Activated naive CD4-positive, alpha-beta T cell treated with anti-CD3 and anti-CD28 coated beads for 36 hours (primary cell): ENCODE measurements at regions of chr4 and their contacts with region 1.

Region 1: GRCh38 chr4:107719922-107720722 is at the start of gene PAPSS1:
- DNase-seq: peak; percentile 96
- H3K4me3 Mint-ChIP-seq: peak within 1 kb of the TSS; percentile 86
- H3K27ac Mint-ChIP-seq: peak within 1 kb of the TSS; percentile 77
- H3K4me1 Mint-ChIP-seq: peaks cover 26% of the 10 kb centered on the region
- H3K27me3 Mint-ChIP-seq: no peaks in the 10 kb centered on the region
- total RNA-seq, gene PAPSS1: 28.7 to 29.1 TPM

Region 2: DNA sequence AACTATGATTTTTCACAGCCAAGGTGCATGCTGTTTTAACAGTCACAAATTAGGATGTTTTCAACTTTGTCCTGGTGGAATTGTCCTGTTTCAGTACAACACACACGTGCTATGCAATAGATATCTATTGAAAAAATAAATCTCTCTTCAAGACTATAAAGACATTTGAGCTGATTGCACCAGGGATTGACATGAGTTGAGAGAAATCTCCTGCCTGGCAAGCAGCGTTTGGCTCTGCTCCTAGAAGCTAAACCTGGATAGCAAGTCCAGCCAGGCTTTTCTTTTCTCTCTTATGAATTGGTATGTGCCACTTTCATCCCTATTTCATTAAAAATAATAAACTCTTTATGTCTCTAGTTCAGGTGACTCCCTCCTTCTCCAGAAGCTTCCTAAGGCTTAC is 1841.5 kb before region 1 on chr4:
- CTCF ChIA-PET with region 1: no interaction called
- intact Hi-C with region 1: no loop called
- DNase-seq: no peak
- H3K4me3 Mint-ChIP-seq: no peak overlapping the region
- H3K27ac Mint-ChIP-seq: no peak overlapping the region
- H3K4me1 Mint-ChIP-seq: no peaks in the 10 kb centered on the region
- H3K27me3 Mint-ChIP-seq: peaks cover 12% of the 10 kb centered on the region

Region 3: DNA sequence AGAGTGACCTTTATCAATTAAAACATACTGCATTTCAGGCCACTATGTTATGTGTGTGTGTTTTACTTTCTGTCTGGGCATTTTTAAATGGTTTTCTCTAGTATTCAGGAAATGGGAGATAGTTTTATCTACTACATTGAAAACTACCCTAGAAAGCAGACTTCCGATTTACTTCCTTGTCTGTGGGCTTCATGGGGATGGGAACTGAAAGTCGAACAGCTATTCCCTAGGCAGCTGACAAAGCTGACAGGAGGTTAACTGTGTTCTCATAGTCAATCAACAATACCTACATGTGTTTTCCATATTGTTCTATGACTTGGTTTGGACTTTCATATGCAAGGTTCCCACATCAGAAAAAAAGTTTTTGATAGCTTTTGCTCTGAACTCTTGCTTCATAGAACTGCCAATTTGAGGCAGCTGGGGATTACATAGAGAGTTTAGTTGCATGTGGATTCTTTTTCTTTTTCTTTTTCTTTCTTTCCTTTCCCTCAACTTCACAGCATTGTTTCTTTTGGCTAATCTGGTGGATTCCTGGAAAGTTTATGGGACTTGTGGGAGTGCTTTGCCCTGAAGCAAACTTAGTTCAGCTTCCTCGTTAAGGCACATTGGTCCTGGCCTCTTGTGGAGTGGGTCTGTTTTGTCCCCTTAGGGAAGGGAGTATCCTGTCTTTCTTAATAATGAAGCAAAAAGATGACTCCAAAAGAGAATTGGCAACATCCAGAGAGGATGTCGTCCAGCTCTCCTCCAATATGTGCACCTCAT is 1024.4 kb before region 1 on chr4:
- CTCF ChIA-PET with region 1: no interaction called
- intact Hi-C with region 1: no loop called
- DNase-seq: no peak
- H3K4me3 Mint-ChIP-seq: no peak overlapping the region
- H3K27ac Mint-ChIP-seq: no peak overlapping the region
- H3K4me1 Mint-ChIP-seq: no peaks in the 10 kb centered on the region
- H3K27me3 Mint-ChIP-seq: peaks cover 1% of the 10 kb centered on the region

Region 4: GRCh38 chr4:107559653-107560052 is 160.5 kb before region 1 on chr4:
- CTCF ChIA-PET with region 1: no interaction called
- intact Hi-C with region 1: loop called (anchors 5 kb)
- DNase-seq: no peak
- H3K4me3 Mint-ChIP-seq: no peak overlapping the region
- H3K27ac Mint-ChIP-seq: no peak overlapping the region
- H3K4me1 Mint-ChIP-seq: no peaks in the 10 kb centered on the region
- H3K27me3 Mint-ChIP-seq: peaks cover 7% of the 10 kb centered on the region

Region 5: DNA sequence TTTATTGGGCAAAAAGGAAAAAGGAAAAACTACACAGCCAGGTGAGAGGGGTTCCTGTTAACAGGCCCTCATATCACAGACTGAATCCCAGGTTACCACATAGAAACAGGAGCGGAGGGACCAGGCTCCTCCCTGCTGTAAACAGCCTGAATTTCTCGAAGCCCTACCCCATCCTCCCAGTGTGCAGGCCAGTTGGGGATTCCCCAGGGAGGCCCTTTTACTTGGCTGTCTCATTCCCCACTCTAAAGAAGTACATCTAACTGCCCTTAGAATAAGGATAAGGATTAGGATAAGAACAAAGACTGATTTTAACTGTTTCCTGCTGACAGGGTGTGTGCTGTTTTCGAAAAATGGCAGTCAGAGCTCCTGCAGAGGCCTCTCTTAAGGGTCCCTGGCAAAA is 133.8 kb before region 1 on chr4:
- CTCF ChIA-PET with region 1: no interaction called
- intact Hi-C with region 1: no loop called
- DNase-seq: no peak
- H3K4me3 Mint-ChIP-seq: no peak overlapping the region
- H3K27ac Mint-ChIP-seq: no peak overlapping the region
- H3K4me1 Mint-ChIP-seq: no peaks in the 10 kb centered on the region
- H3K27me3 Mint-ChIP-seq: peaks cover 4% of the 10 kb centered on the region

Region 6: DNA sequence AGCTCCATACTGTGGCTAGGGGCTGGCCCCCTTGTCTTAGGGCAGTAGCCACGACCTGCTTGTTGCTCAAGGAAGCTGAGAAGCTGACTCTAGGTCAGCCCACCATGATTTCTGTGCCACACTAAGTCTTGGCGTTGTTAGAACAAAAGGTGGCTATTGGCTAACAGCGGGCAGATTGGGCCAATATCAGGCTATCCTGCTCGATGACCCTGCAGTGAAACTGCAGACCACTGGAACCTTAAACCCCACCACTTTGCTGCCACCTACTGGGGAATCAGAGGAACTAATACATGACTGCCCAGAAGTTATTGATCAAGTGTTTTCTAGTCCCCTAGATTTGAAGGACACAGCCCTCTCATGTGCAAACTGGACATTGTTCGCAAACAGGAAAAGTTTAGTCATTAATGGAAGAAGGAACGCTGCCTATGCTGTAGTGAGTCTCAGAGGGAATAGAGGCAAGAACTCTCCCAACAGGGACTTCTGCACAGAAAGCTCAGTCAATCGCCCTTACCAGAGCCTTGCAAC is 16.9 kb after region 1 on chr4:
- CTCF ChIA-PET with region 1: interaction called, 15 read pairs
- intact Hi-C with region 1: no loop called
- DNase-seq: peak; percentile 40
- H3K4me3 Mint-ChIP-seq: no peak overlapping the region
- H3K27ac Mint-ChIP-seq: no peak overlapping the region
- H3K4me1 Mint-ChIP-seq: no peaks in the 10 kb centered on the region
- H3K27me3 Mint-ChIP-seq: no peaks in the 10 kb centered on the region

Region 7: DNA sequence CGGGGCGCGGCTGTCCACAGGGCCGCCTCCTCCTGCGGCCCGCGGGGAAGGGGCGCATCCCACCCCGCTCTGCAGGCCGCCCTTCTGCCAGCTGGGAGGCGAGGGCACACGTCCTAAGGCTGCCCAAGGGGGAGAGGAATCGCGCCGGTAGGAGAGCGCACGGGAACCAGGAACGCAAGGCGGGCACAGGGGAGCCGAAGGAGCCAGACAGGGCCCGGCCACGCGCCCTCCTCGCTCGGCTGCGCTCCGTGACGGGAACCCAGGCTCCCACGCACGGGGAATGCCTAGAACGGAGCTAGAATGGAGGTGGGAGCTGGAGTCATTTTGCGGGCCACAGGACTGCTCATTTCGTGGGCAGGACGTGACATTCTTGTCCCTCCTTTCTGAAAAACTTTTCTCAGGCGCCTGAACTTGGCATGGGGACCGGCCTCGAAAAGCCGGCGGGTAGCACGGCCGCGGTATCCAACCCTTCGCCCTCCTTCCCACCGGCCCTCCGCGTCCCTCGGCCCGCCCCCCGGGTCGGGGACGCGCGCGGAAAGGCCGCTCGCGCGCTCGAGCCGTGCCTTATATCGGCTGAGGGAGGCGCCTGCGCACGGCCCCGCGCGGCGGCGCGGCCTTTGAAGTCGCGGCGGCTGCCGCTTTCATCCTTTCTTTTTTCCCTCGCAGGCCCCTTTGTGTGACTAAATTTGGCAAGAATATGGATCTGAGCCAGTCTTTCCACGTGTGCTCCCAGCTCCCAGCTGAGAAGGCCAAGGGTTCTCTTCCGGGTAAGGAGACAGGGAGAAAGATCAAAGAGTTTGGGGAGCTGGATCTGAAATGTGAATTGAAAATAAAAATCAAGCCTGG is 452.9 kb after region 1 on chr4:
- CTCF ChIA-PET with region 1: no interaction called
- intact Hi-C with region 1: loop called (anchors 5 kb)
- DNase-seq: peak; percentile 79
- H3K4me3 Mint-ChIP-seq: peak overlapping the region; percentile 91
- H3K27ac Mint-ChIP-seq: peak overlapping the region; percentile 92
- H3K4me1 Mint-ChIP-seq: peaks cover 50% of the 10 kb centered on the region
- H3K27me3 Mint-ChIP-seq: no peaks in the 10 kb centered on the region

Region 8: DNA sequence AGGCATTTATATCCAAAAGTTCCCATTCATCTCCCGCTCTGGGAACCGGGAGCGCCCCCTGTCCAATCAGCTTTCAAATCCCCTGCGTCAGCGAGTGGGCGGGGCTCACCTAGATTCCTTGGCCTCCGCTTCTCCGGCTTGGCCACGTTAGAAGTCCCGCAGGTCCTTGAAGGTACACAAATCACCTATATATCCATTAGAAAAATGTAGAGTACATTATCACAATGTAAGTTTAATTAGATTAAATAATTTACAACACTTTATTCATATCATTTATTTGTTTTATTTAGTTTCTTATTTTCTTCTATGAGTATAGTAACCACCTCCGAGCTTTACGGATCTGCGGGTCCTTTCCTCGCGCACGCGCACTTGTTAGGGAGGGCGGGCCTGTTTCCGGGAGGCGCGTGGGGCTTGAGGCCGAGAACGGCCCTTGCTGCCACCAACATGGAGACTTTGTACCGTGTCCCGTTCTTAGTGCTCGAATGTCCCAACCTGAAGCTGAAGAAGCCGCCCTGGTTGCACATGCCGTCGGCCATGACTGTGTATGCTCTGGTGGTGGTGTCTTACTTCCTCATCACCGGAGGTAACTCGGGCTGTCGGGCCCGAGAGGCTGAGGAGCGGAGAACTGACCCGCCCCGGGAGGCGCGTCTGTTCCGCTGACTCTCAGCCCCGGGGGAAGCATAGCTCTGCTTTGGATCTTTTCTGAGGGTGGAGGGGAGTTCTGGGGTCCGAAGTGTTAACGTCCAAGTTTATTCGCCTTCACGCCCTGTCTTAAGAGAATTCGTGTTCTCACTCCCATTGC is 930.3 kb after region 1 on chr4 and contains the start of gene OSTC:
- CTCF ChIA-PET with region 1: no interaction called
- intact Hi-C with region 1: loop called (anchors 1 kb)
- DNase-seq: peak; percentile 95
- H3K4me3 Mint-ChIP-seq: peak within 1 kb of the TSS; percentile 95
- H3K27ac Mint-ChIP-seq: peak within 1 kb of the TSS; percentile 91
- H3K4me1 Mint-ChIP-seq: peaks cover 30% of the 10 kb centered on the region
- H3K27me3 Mint-ChIP-seq: no peaks in the 10 kb centered on the region
- total RNA-seq, gene OSTC: 72.5 to 73.3 TPM

Region 9: GRCh38 chr4:109026588-109026987 is 1306.5 kb after region 1 on chr4:
- CTCF ChIA-PET with region 1: no interaction called
- intact Hi-C with region 1: no loop called
- DNase-seq: no peak
- H3K4me3 Mint-ChIP-seq: no peak overlapping the region
- H3K27ac Mint-ChIP-seq: no peak overlapping the region
- H3K4me1 Mint-ChIP-seq: no peaks in the 10 kb centered on the region
- H3K27me3 Mint-ChIP-seq: no peaks in the 10 kb centered on the region